ENCODE measurements at regions of chr15 and their contacts with region 1.

Region 1: DNA sequence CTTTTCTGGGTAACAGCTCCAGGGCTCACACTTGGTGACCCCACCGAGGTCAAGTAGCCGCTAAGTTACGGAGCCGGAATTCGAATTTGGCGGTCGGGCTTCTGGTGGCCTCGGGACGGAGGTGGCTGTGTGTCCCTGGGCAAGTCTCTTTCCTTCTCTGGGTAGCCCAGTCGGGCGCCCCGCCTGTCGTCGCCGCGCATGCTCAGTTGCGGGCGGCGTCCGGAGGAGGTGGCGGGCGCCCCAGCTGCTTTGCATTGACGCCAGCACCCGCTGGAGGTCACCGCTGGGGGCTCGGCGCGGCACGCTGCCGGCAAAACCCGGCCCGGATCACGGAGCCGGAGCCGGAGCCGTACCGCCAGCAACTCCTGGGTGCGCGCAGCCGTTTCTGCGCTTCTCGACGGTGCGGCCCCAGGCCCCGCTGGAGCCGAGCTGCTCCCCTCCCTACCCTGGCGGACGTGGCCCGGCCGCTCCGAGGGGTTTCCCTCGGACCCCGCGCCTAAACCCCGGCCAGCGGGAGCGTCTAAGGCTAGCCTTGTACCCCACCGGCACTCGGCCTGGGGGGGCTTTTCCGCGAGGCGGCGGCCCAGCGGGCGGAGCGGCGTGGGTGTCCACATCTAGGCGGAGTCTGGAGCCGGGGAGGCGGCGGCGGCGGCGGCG is 474 bp upstream of the PDE8A start:
- DNase-seq: peak; percentile 97
- H3K4me3 Mint-ChIP-seq: peak overlapping the region; percentile 90
- H3K27ac Mint-ChIP-seq: peak overlapping the region; percentile 92
- H3K4me1 Mint-ChIP-seq: peaks cover 37% of the 10 kb centered on the region
- H3K27me3 Mint-ChIP-seq: no peaks in the 10 kb centered on the region

Region 2: DNA sequence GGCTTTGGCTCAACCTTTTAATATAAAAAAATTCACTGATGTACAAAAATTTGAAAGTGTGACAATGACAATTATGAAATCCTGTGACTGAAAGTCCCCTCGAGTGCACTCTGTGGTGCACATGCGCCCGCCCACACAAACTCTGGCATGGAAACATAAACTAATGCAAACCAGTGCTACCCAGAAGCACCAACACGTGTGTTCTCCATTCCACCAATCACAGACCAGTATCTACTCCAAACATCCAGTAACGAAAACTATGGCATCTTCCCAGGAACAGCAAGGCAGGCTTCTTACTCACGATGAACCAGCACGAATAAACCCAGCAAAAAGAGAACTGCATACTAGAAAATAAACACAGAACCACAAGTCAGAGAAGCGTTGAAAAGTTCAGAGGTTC is 311.5 kb before region 1 on chr15:
- CTCF ChIA-PET with region 1: no interaction called
- POLR2A ChIA-PET with region 1: no interaction called
- intact Hi-C with region 1: loop called (anchors 5 kb)
- DNase-seq: peak; percentile 76
- H3K4me3 Mint-ChIP-seq: no peak overlapping the region
- H3K27ac Mint-ChIP-seq: peak overlapping the region; percentile 79
- H3K4me1 Mint-ChIP-seq: peaks cover 60% of the 10 kb centered on the region
- H3K27me3 Mint-ChIP-seq: no peaks in the 10 kb centered on the region

Region 3: DNA sequence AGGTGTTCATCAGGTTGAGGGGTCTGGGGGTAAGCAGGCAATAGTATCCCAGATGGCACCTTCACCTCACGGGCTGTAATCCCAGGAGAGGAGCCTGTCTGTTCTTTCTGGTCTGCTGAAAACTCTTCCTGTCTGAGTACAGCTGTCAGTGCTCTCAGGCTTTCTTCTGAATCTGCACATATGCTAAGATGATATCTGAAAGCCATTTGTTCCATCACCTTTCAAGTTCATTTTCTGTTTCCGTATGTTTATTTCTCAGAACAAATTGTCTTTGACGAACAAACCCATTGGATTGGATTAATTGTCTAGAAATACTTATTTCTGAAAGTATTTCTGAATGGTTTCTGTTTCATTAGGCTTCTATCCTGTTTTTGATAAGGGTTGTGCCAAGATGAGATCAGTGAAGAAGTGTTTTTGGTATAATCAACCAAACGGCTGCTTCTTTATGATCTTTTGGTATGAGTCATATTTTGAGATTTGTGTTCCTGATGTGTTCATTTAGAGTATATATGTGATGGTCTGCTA is 219.5 kb before region 1 on chr15:
- CTCF ChIA-PET with region 1: no interaction called
- POLR2A ChIA-PET with region 1: no interaction called
- intact Hi-C with region 1: loop called (anchors 5 kb)
- DNase-seq: no peak
- H3K4me3 Mint-ChIP-seq: no peak overlapping the region
- H3K27ac Mint-ChIP-seq: no peak overlapping the region
- H3K4me1 Mint-ChIP-seq: peaks cover 22% of the 10 kb centered on the region
- H3K27me3 Mint-ChIP-seq: no peaks in the 10 kb centered on the region

Region 4: DNA sequence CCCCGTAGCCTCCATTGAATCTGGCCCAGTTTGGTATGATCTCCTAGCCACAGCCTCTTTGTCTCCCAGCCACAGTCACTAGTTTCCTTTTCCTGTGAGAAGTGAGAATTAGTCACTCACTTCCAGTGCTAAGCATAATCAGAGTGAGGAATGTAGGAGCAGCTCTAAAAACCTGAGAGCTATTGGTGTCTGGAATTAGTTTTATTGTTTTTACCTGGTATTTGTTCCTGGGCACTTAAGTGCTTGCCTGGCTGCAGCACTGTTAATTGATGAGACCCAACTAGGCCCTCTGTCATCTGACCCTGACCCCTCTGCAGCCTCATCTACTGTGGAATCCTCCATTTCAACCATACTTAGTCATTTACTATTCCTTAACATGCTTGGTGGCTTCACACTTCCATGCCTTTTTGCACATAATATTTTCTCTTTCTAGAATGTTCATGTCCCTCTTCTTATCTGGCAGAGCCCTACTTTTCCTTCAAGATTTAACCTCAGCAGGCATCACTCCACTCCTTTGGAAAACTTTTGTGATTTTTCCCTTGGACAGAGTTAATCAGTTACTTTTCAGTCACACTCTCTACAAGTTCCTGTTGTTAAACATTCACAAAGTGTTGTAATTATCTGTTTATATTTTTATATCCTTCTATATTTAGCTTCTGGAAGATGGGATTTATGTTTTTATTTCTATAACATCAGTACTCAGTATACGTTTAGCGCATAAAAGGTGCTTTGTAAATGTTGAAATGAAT is 49.3 kb after region 1 on chr15:
- CTCF ChIA-PET with region 1: no interaction called
- POLR2A ChIA-PET with region 1: interaction called, 4 read pairs
- intact Hi-C with region 1: loop called (anchors 2 kb)
- DNase-seq: peak; percentile 34
- H3K4me3 Mint-ChIP-seq: peak overlapping the region; percentile 0
- H3K27ac Mint-ChIP-seq: peak overlapping the region; percentile 4
- H3K4me1 Mint-ChIP-seq: peaks cover 59% of the 10 kb centered on the region
- H3K27me3 Mint-ChIP-seq: no peaks in the 10 kb centered on the region

Region 5: DNA sequence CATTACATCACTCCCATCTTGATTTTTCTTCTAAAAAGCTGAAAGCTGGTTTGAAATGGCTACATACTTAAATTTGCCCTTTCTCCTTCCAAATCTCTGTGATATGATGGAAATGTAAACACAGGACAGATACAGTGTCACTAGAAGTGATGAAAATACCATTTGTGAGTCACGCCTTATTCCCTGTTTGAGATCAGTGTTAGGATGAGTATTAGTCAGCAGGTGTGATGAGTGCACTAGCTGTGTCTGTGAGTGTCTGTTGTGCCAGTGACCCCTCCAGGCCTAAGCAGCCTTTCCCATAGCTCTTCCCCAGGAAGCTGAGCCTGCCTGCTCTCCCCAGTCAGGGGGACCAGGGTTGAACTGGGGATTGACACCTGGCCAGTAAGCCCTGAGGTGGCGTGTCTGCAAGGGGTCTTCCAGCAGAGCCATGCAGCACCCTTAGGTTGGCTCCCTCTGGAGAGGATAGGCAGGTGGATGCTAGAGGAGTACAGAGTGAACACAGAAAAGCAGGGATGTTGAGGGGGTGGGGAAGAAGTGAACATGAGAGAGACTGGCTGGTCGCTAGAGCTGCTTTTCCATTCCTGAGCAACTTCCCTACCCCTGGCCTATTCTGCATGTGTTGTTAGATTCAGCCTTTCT is 92.5 kb after region 1 on chr15:
- CTCF ChIA-PET with region 1: interaction called, 12 read pairs
- POLR2A ChIA-PET with region 1: interaction called, 4 read pairs
- intact Hi-C with region 1: loop called (anchors 1 kb)
- DNase-seq: peak; percentile 52
- H3K4me3 Mint-ChIP-seq: no peak overlapping the region
- H3K27ac Mint-ChIP-seq: peak overlapping the region; percentile 60
- H3K4me1 Mint-ChIP-seq: peaks cover 22% of the 10 kb centered on the region
- H3K27me3 Mint-ChIP-seq: no peaks in the 10 kb centered on the region

Region 6: DNA sequence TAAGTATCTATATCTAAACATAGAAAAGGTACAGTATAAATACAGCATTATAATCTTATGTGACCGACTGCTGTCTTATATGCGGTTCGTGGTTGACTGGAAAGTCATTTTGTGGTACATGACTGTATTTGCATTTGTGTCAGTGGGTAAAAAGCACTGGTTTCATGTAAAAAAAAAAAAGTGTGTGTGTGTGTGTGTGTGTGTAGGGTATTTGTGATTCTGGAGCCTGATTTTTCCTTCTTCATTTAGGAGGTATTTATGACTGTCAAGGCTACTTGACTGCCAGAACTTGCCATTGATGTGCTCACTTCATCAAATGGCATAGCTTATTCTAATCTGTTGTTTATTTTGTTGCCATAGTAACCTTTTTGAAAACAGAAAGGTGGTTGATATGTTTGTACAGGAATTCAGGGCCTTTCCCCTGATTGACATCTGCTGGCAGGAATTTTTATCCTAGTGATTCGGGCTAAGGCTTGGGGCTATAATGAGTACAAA is 462.5 kb after region 1 on chr15:
- CTCF ChIA-PET with region 1: no interaction called
- POLR2A ChIA-PET with region 1: no interaction called
- intact Hi-C with region 1: loop called (anchors 10 kb)
- DNase-seq: no peak
- H3K4me3 Mint-ChIP-seq: no peak overlapping the region
- H3K27ac Mint-ChIP-seq: peak overlapping the region; percentile 24
- H3K4me1 Mint-ChIP-seq: peaks cover 51% of the 10 kb centered on the region
- H3K27me3 Mint-ChIP-seq: no peaks in the 10 kb centered on the region

Region 7: GRCh38 chr15:85794603-85795336 is 813.6 kb after region 1 on chr15 and contains the start of gene KLHL25:
- CTCF ChIA-PET with region 1: no interaction called
- POLR2A ChIA-PET with region 1: no interaction called
- intact Hi-C with region 1: loop called (anchors 5 kb)
- DNase-seq: peak; percentile 95
- H3K4me3 Mint-ChIP-seq: peak within 1 kb of the TSS; percentile 90
- H3K27ac Mint-ChIP-seq: peak within 1 kb of the TSS; percentile 74
- H3K4me1 Mint-ChIP-seq: peaks cover 32% of the 10 kb centered on the region
- H3K27me3 Mint-ChIP-seq: no peaks in the 10 kb centered on the region
- total RNA-seq, gene KLHL25: 5.3 to 5.7 TPM